ENCODE measurements at regions of chr2 and their contacts with region 1.

Region 1: GRCh38 chr2:218395797-218396687 is 3.6 kb upstream of the CTDSP1 start:
- ATAC-seq: peak; percentile 47 to 85 (median 78)
- H3K4me3 ChIP-seq: peak overlapping the region; percentile 83 to 96 (median 85)
- H3K27ac ChIP-seq: peak overlapping the region; percentile 64 to 89
- H3K4me1 ChIP-seq: peaks cover 2 to 22% of the 10 kb centered on the region in 2 donors

Region 2: DNA sequence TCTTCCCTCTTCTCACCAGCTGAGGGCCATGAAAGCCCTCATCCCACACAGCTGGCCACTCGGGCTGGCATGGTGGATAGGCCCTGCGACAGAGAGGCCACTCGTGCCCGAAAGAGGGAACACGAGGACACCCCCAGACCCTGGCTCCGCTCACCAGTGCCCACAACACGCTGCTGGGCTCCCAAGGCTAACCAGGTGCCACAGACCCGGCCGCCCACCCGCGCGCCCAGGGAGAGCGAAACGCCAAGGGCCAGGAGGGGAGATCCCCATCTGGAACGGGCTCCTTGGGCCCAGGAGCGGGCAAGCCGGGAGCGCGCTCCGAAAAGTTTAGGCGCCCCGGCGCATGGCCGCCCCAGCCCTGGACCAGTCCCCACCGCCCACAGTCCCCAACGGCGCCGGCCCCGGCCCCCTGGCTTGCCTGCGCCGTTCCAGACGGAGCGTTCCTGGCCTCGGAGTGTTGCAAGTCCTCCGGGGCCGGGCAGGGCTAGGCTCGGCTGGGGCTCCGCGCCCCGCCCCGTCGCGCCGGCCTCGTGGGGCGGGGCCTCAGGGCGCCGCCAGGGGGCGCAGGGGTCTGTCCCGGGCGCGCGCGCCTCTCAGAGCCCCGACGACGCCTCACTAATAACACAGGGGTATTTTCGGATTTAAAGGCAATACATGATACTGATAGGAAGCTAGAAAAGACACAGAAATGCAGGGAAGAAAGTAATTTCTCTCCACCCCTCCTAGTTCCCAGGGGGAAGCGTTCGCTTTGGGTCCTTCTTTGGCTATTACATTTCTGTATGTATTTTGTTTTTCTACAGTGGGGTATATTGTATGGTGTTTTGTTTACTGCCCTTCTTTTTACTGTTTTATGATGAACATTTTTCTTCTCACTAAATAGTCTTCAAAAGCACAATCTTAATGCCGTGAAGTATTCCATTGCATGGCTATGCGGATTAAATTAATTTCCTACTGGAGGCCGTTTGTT is 103.7 kb before region 1 on chr2 and contains the start of gene TMBIM1:
- in situ Hi-C with region 1: loop called in 7 of 9 experiments (anchors 25 kb)
- ATAC-seq: peak; percentile 36 to 91 (median 67)
- H3K4me3 ChIP-seq: no peak within 1 kb of the TSS
- H3K27ac ChIP-seq: no peak within 1 kb of the TSS
- H3K4me1 ChIP-seq: peaks cover 0 to 3% of the 10 kb centered on the region in 2 donors
- total RNA-seq, gene TMBIM1: 0.54 to 276 (median 8.6) TPM

Region 3: GRCh38 chr2:218301176-218301819 is 94.7 kb before region 1 on chr2:
- in situ Hi-C with region 1: loop called in 8 of 9 experiments (anchors 10 to 25 kb)
- ATAC-seq: peak; percentile 70 to 97 (median 89)
- H3K4me3 ChIP-seq: no peak overlapping the region
- H3K27ac ChIP-seq: no peak overlapping the region
- H3K4me1 ChIP-seq: no peaks in the 10 kb centered on the region